Tibial artery (tissue), 4 donors: ENCODE measurements at regions of chr6 and their contacts with region 1.

Region 1: DNA sequence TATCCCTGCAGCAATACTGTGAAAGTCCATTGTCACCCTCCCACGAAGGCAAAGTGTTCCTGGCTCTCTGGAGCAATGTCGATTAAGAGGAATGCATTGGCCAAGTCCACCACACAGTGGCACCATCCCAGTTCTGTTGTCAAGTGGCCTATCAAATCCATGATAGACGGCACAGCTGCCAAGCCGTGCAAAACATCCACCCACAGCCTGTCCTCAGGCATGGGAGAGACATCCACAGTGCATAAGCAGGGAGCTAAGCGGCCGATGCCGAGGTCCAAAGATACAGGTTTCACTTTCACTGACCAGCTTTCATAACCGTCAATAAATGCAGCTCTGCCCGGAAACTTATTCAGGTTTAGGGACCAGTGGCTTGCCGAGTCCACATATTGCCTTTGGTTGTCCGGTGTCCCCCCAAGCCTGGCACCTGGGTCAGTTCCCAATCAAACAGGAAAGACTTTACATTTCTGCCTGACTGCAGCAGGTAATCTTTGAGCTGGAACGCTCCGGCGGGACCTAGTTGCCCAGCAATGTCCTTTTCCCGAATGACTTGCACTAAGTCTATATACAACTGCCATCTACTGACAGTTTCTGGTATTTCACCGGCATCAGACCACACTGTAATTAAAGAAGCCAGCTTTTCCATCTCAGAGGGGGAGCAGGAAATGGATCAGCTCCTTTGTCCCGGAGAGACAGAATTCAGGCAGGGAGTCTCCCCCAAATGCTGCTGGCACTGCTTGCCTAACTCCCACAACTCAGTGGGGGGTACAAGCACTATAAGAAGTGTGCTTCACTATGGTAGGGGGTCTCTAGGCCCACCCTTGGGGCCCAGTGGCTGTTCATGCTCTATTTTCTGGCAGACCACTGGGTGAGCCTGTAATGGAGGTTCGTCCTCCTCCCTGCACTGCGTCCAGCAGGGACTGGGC is 6.3 kb downstream of the ZKSCAN3 start:
- DNase-seq: peak; percentile 68 to 79
- H3K4me3 ChIP-seq: peak overlapping the region; percentile 67 to 69
- H3K27ac ChIP-seq: peak overlapping the region; percentile 77 to 82
- H3K4me1 ChIP-seq: peaks cover 0 to 23% (median 20%) of the 10 kb centered on the region in 4 donors
- H3K27me3 ChIP-seq: no peaks in the 10 kb centered on the region
- CTCF ChIP-seq: peak; percentile 79 to 84

Region 2: DNA sequence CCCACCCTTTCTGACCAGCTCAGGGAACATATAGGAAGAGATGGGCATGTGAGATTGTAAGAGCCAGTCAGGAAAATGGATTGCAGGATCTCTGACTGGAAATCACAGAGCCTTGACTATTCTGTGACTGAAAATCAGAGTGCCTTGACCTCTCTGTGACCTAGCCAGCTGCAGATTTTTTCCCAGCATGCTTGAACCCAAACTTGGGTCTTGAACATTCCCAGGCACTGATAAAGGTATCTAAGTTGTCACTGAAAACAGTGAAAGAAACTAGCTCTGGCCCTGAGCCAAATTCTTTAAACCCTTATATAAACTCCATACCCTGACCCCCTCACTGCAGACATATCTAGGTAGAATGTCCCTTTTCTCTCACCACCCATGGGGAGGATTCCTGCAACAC is 278.0 kb before region 1 on chr6:
- intact Hi-C with region 1: loop called (anchors 5 kb)
- DNase-seq: no peak
- H3K4me3 ChIP-seq: no peak overlapping the region
- H3K27ac ChIP-seq: no peak overlapping the region
- H3K4me1 ChIP-seq: peaks cover 0 to 10% (median 2%) of the 10 kb centered on the region in 4 donors
- H3K27me3 ChIP-seq: no peaks in the 10 kb centered on the region
- CTCF ChIP-seq: no peak

Region 3: GRCh38 chr6:28136585-28137504 is 219.2 kb before region 1 on chr6:
- intact Hi-C with region 1: loop called (anchors 5 kb)
- DNase-seq: peak; percentile 90 to 93
- H3K4me3 ChIP-seq: peak overlapping the region; percentile 72 to 81
- H3K27ac ChIP-seq: peak overlapping the region; percentile 95 to 98
- H3K4me1 ChIP-seq: peaks cover 0 to 30% (median 13%) of the 10 kb centered on the region in 4 donors
- H3K27me3 ChIP-seq: no peaks in the 10 kb centered on the region
- CTCF ChIP-seq: no peak

Region 4: DNA sequence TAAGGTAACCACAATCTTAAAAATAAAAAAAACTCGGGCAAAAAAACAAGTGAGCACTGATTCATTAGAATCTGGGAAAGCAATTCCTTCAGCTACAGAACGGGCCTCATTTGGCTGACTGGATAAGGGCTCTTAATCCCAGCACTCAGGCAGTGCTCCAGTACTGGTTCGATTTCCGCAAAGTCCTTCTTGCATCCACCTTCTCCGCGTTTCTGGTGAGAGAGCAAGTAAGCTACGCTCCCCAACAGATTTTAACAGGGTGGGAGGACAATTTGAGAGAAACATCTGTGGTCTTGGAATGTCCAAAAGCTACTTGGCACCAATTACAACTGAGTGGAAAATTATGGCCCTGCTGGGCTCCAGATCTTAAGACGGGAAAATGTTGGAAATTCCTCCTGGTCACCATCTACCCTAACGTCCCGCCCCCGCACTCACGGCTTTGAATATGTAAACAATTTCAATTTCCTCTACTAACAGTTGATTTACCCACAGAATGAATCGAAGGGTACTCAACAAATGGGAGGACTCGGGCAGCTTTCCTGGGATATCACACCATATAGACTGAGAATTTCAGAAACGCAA is 149.0 kb before region 1 on chr6:
- intact Hi-C with region 1: no loop called
- DNase-seq: no peak
- H3K4me3 ChIP-seq: peak overlapping the region in 1 of 2 donors; percentile 27
- H3K27ac ChIP-seq: no peak overlapping the region
- H3K4me1 ChIP-seq: peaks cover 0 to 14% (median 6%) of the 10 kb centered on the region in 4 donors
- H3K27me3 ChIP-seq: peaks cover 0 to 62% of the 10 kb centered on the region in 2 donors
- CTCF ChIP-seq: no peak

Region 5: GRCh38 chr6:28225056-28225834 is 130.8 kb before region 1 on chr6 and contains the start of gene ZSCAN9:
- intact Hi-C with region 1: loop called (anchors 10 kb)
- DNase-seq: peak; percentile 88 to 92
- H3K4me3 ChIP-seq: peak within 1 kb of the TSS; percentile 69 to 72
- H3K27ac ChIP-seq: peak within 1 kb of the TSS; percentile 78 to 80
- H3K4me1 ChIP-seq: peaks cover 0 to 11% (median 7%) of the 10 kb centered on the region in 4 donors
- H3K27me3 ChIP-seq: peaks cover 0 to 3% of the 10 kb centered on the region in 2 donors
- CTCF ChIP-seq: no peak

Region 6: DNA sequence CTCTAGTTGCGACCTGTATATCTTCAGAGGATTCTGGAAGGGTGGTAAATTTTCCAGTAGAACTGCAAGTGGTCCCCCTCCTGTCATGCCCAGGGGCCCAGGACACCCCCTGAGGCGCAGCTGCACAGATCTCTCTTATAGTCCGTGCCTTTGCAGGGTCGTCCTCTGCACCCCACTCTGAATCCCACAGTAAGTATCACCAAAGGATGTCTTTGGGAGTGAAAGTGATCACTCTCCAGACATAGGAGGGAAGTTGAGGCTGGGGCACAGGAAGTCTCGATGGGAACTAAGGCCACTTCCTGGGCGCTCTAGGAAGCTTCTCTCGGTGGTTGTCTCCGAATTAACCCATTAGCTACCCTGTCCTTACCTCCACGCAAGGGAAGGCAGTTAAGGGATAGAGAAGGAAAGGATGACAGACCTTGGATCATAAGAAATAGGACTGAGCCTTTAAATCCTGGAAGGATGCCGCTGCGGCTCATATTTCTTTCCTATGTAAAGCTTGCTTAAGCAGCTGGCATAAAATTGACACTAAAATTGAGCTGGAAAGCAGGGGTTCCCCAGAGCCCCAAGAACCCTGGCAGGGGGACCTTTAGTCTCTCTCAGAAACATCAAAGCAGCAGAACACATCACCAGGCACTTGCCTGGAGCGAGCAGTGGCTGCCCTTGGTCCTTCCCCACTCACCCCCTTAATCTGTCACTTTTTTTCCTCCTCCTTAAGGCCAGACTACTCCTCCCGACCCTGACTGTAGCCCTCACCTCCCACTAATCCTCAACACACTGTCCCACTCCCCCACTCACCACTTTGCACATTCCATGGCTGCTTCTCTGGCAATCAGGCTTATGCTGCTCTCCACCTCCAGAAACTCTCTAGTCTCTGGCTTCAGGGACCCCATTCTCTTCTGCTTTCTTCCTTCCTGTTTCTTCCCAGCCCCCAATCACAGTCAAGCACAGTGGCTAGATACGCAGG is 103.7 kb before region 1 on chr6 and contains the start of gene ZKSCAN4:
- intact Hi-C with region 1: loop called (anchors 10 kb)
- DNase-seq: peak; percentile 74 to 78
- H3K4me3 ChIP-seq: peak within 1 kb of the TSS; percentile 74 to 89
- H3K27ac ChIP-seq: peak within 1 kb of the TSS; percentile 59 to 60
- H3K4me1 ChIP-seq: peaks cover 0 to 24% (median 16%) of the 10 kb centered on the region in 4 donors
- H3K27me3 ChIP-seq: no peaks in the 10 kb centered on the region
- CTCF ChIP-seq: no peak